ENCODE measurements at regions of chr18 and their contacts with region 1.

Region 1: DNA sequence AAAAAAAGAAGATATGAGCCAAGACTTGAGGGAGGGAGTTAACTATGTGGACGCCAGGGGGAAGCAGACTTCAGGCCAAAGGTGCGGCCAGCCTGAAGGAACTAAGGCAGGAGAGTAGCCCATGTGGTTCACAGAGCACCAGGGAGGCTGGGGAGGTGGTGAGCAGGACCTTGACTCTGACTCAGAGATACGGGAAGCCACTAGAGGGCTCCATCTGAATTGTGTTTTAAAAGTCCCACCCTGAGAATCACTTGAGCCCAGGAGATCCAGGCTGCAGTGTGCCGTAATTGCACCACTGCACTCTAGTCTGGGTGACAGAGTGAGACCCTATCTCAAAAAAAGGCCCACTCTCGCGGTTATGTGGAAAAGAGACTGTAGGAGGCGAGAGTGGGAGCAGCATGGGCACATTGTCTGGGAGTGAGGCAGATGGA is 12.3 kb downstream of the CEP192 start:
- DNase-seq: peak in 2 of 3 donors; percentile 26 to 54
- ATAC-seq: peak; percentile 77 to 87
- H3K4me3 ChIP-seq: no peak overlapping the region
- H3K27ac ChIP-seq: no peak overlapping the region
- H3K4me1 ChIP-seq: no peaks in the 10 kb centered on the region
- H3K27me3 ChIP-seq: no peaks in the 10 kb centered on the region

Region 2: DNA sequence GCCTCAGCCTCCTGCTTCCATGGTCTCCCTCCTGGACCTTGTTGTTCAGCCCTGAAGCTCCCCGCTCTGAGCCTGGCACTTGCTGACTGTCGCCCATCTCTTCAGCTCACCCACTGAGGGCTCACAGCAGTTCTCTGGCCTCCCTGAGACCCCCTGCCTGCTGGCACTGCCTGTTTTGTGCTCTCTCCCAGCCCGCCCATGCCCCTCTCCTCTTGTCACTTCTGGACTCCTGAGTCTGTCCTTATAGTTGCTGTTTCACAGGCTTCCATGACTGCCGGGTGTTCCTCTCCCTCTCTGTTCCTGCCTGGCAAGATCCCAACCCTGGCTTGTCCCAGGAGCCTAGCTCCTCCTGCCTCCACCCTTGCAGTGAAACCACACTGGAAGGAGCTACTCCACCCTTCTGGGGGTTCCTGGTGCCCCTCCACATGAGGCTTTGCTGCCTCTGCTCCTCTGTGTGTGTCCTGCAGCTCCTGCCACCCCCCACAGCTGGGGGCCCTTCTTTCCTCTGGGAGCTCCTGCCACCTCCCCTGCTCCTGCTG is 98.2 kb after region 1 on chr18:
- intact Hi-C with region 1: no loop called
- DNase-seq: no peak
- ATAC-seq: peak; percentile 16 to 26
- H3K4me3 ChIP-seq: no peak overlapping the region
- H3K27ac ChIP-seq: no peak overlapping the region
- H3K4me1 ChIP-seq: no peaks in the 10 kb centered on the region
- H3K27me3 ChIP-seq: no peaks in the 10 kb centered on the region

Region 3: GRCh38 chr18:13112982-13113381 is 109.5 kb after region 1 on chr18:
- intact Hi-C with region 1: loop called in 1 of 4 experiments (anchors 10 kb)
- DNase-seq: peak; percentile 72 to 88 (median 86)
- ATAC-seq: peak; percentile 95 to 98
- H3K4me3 ChIP-seq: no peak overlapping the region
- H3K27ac ChIP-seq: no peak overlapping the region
- H3K4me1 ChIP-seq: no peaks in the 10 kb centered on the region
- H3K27me3 ChIP-seq: no peaks in the 10 kb centered on the region

Region 4: DNA sequence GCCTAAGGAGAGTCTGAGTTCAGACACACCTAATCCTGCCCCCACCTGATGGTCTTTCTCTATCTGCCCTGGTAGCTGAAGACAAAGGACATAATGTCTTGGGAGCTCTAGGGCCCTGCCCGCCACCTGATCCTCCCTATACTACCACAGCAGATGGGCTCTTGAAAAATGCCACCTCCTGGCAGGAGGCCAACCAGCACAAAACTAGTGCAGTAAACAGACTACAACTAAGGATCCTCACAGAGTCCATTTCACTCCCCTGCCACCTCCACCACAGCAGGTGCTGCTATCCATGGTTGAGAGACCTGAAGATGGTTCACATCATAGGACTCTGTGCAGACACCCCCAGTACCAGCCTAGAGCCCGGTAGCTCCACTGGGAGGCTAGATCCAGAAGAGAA is 162.5 kb after region 1 on chr18:
- intact Hi-C with region 1: loop called in 1 of 4 experiments (anchors 10 kb)
- DNase-seq: no peak
- ATAC-seq: no peak
- H3K4me3 ChIP-seq: no peak overlapping the region
- H3K27ac ChIP-seq: no peak overlapping the region
- H3K4me1 ChIP-seq: no peaks in the 10 kb centered on the region
- H3K27me3 ChIP-seq: no peaks in the 10 kb centered on the region

Measured in right cardiac atrium (tissue), 5 donors.